ENCODE measurements at regions of chrX and their contacts with region 1.

Region 1: GRCh38 chrX:78517124-78517523 is 142.0 kb downstream of the RTL3 start:
- DNase-seq: peak; percentile 56
- H3K4me3 Mint-ChIP-seq: peak overlapping the region; percentile 35
- H3K27ac Mint-ChIP-seq: peak overlapping the region; percentile 92
- H3K4me1 Mint-ChIP-seq: peaks cover 47% of the 10 kb centered on the region
- H3K27me3 Mint-ChIP-seq: no peaks in the 10 kb centered on the region

Region 2: GRCh38 chrX:77962068-77962902 is 554.8 kb before region 1 on chrX:
- intact Hi-C with region 1: loop called (anchors 2 kb)
- DNase-seq: peak; percentile 5
- H3K4me3 Mint-ChIP-seq: peak overlapping the region; percentile 80
- H3K27ac Mint-ChIP-seq: peak overlapping the region; percentile 99
- H3K4me1 Mint-ChIP-seq: peaks cover 54% of the 10 kb centered on the region
- H3K27me3 Mint-ChIP-seq: no peaks in the 10 kb centered on the region

Region 3: GRCh38 chrX:78092296-78092695 is 424.8 kb before region 1 on chrX:
- intact Hi-C with region 1: no loop called
- DNase-seq: no peak
- H3K4me3 Mint-ChIP-seq: no peak overlapping the region
- H3K27ac Mint-ChIP-seq: no peak overlapping the region
- H3K4me1 Mint-ChIP-seq: peaks cover 16% of the 10 kb centered on the region
- H3K27me3 Mint-ChIP-seq: peaks cover 13% of the 10 kb centered on the region

Region 4: GRCh38 chrX:78119521-78120227 is 397.4 kb before region 1 on chrX:
- intact Hi-C with region 1: loop called (anchors 5 kb)
- DNase-seq: no peak
- H3K4me3 Mint-ChIP-seq: no peak overlapping the region
- H3K27ac Mint-ChIP-seq: no peak overlapping the region
- H3K4me1 Mint-ChIP-seq: peaks cover 62% of the 10 kb centered on the region
- H3K27me3 Mint-ChIP-seq: no peaks in the 10 kb centered on the region

Region 5: GRCh38 chrX:78375894-78376293 is 141.2 kb before region 1 on chrX:
- intact Hi-C with region 1: loop called (anchors 1 kb)
- DNase-seq: no peak
- H3K4me3 Mint-ChIP-seq: no peak overlapping the region
- H3K27ac Mint-ChIP-seq: peak overlapping the region; percentile 27
- H3K4me1 Mint-ChIP-seq: peaks cover 46% of the 10 kb centered on the region
- H3K27me3 Mint-ChIP-seq: no peaks in the 10 kb centered on the region

Region 6: DNA sequence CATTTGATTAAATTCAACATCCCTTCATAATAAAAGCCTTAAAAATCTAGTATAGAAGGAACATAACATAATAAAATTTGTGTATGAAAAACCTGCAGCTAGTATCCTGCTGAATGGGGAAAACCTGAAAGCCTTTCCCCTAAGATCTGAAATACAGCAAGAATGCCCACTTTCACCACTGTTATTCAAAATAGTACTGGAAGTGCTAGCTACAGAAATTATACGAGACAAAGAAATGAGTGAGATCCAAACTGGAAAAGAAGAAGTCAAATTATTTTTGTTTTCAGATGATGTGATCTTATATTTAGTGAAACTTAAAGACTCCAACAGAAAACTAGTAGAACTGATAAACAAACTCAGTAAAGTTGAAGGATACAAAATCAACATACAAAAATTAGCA is 10.9 kb before region 1 on chrX:
- intact Hi-C with region 1: no loop called
- DNase-seq: no peak
- H3K4me3 Mint-ChIP-seq: no peak overlapping the region
- H3K27ac Mint-ChIP-seq: no peak overlapping the region
- H3K4me1 Mint-ChIP-seq: no peaks in the 10 kb centered on the region
- H3K27me3 Mint-ChIP-seq: no peaks in the 10 kb centered on the region

Region 7: GRCh38 chrX:78945186-78945912 is 428.2 kb after region 1 on chrX and contains the start of gene P2RY10:
- intact Hi-C with region 1: loop called (anchors 2 kb)
- DNase-seq: peak; percentile 6
- H3K4me3 Mint-ChIP-seq: peak within 1 kb of the TSS; percentile 98
- H3K27ac Mint-ChIP-seq: peak within 1 kb of the TSS; percentile 97
- H3K4me1 Mint-ChIP-seq: peaks cover 48% of the 10 kb centered on the region
- H3K27me3 Mint-ChIP-seq: no peaks in the 10 kb centered on the region
- total RNA-seq, gene P2RY10: 34.6 and 44.9 TPM in 2 replicates

Region 8: GRCh38 chrX:79182616-79183015 is 665.5 kb after region 1 on chrX:
- intact Hi-C with region 1: loop called (anchors 5 kb)
- DNase-seq: no peak
- H3K4me3 Mint-ChIP-seq: peak overlapping the region; percentile 72
- H3K27ac Mint-ChIP-seq: peak overlapping the region; percentile 81
- H3K4me1 Mint-ChIP-seq: peaks cover 52% of the 10 kb centered on the region
- H3K27me3 Mint-ChIP-seq: no peaks in the 10 kb centered on the region

Measured in activated T-helper 1 cell treated with anti-CD3 and anti-CD28 coated beads, Interleukin-12 subunit alpha, Interleukin-12 subunit beta, Interleukin-2, Interleukin-4 antibody, amounts not matched to agents 30 ng/mL and 10 ng/mL and 1 ng/mL, durations not matched to agents 14 hours and 24 hours and 36 hours (primary cell).